ENCODE measurements at regions of chr17 and their contacts with region 1.

Region 1: DNA sequence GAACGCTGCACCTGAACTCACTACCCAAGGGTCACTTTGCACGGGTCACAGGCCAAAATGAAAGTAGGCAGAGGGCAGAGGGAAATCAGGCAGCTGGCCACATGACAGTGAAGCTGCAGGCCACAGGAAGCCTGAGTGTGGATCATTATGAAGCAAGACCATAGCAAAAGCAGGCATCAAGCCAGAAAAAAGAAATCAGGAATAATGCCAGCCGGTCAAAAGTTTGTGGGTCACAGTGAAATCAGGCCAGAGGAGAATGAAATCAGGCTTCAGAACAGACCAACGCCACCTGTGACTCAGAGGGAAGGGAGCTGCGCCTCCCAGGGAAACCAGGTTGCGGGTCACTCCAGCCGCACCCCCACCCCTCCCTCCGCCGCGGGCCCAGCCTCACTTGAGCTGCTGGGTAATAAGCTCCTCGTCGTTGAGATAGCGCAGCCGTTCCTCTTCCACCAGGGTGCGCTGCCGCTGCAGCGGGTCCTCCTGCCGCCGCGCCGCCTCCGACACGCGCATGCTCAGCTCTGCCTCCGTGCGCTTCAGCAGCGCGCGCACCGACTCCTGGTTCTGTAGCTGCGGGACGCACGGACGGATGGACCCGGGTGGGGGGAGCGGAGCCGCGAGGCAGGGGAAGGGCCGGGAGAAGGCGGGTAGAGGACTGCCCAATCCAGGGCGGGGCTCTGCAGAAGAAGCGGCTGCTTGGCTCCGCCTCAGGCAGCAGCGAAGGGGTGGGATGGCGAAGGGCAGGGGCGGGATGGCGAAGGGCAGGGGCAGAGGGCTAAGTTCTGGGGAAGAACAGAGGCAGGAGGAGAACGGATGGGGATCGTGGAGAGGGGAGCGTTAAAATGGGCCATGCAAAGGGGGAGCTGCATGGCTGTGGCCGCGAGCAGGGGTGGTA is 47.7 kb downstream of the SRCIN1 start:
- DNase-seq: peak; percentile 90
- H3K4me3 Mint-ChIP-seq: peak overlapping the region; percentile 77
- H3K27ac Mint-ChIP-seq: no peak overlapping the region
- H3K4me1 Mint-ChIP-seq: peaks cover 24% of the 10 kb centered on the region
- H3K27me3 Mint-ChIP-seq: peaks cover 45% of the 10 kb centered on the region

Region 2: GRCh38 chr17:38578229-38579082 is 20.4 kb after region 1 on chr17:
- CTCF ChIA-PET with region 1: interaction called, 38 read pairs
- POLR2A ChIA-PET with region 1: no interaction called
- DNase-seq: no peak
- H3K4me3 Mint-ChIP-seq: no peak overlapping the region
- H3K27ac Mint-ChIP-seq: no peak overlapping the region
- H3K4me1 Mint-ChIP-seq: no peaks in the 10 kb centered on the region
- H3K27me3 Mint-ChIP-seq: peaks cover 81% of the 10 kb centered on the region

Region 3: GRCh38 chr17:38584350-38584925 is 26.4 kb after region 1 on chr17:
- CTCF ChIA-PET with region 1: interaction called, 38 read pairs
- POLR2A ChIA-PET with region 1: no interaction called
- DNase-seq: peak; percentile 51
- H3K4me3 Mint-ChIP-seq: no peak overlapping the region
- H3K27ac Mint-ChIP-seq: no peak overlapping the region
- H3K4me1 Mint-ChIP-seq: peaks cover 11% of the 10 kb centered on the region
- H3K27me3 Mint-ChIP-seq: peaks cover 73% of the 10 kb centered on the region

Region 4: DNA sequence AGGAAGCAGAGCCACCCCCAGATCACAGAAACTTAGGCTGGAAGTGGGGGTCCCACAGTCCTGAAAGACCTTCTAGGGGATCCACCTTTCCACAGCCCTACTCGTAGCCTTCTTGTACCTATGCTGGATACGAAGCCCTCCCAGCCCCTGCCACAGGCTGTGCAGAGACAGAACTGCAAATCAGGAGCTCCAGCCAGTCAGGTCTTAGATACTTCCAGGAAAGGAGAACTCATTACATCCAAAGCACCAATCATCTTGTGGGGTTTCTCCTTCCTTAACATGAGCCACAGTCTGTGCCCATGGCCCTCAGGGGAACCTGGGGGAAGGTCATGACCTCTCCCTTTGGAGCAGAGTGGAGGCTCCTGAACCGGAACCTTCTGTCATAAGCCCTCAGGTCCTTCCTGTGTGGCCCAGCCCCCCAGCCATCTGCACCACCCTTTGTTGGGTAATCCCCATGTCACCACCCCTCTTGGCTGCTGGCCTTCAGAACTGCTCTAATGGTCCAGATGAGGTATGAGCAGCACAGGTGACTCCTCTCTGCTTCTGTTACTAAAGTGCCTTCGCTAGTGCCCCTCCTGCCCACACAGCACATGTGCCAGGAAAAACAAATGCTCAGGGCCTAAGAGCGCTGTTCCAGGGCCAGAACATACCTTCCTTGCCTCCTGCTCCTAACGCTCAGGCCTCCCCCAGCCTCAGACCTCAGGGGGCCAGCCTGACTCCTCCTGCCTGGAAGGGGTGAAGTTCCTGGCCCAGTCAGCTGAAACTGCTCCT is 33.1 kb after region 1 on chr17:
- CTCF ChIA-PET with region 1: interaction called, 38 read pairs
- POLR2A ChIA-PET with region 1: no interaction called
- DNase-seq: no peak
- H3K4me3 Mint-ChIP-seq: no peak overlapping the region
- H3K27ac Mint-ChIP-seq: no peak overlapping the region
- H3K4me1 Mint-ChIP-seq: peaks cover 24% of the 10 kb centered on the region
- H3K27me3 Mint-ChIP-seq: peaks cover 85% of the 10 kb centered on the region

Region 5: GRCh38 chr17:38601539-38602351 is 43.7 kb after region 1 on chr17:
- CTCF ChIA-PET with region 1: interaction called, 14 read pairs
- POLR2A ChIA-PET with region 1: interaction called, 3 read pairs
- DNase-seq: no peak
- H3K4me3 Mint-ChIP-seq: no peak overlapping the region
- H3K27ac Mint-ChIP-seq: no peak overlapping the region
- H3K4me1 Mint-ChIP-seq: peaks cover 7% of the 10 kb centered on the region
- H3K27me3 Mint-ChIP-seq: peaks cover 76% of the 10 kb centered on the region

Region 6: GRCh38 chr17:38667099-38667786 is 109.2 kb after region 1 on chr17:
- CTCF ChIA-PET with region 1: interaction called, 32 read pairs
- POLR2A ChIA-PET with region 1: no interaction called
- DNase-seq: peak; percentile 57
- H3K4me3 Mint-ChIP-seq: no peak overlapping the region
- H3K27ac Mint-ChIP-seq: no peak overlapping the region
- H3K4me1 Mint-ChIP-seq: peaks cover 8% of the 10 kb centered on the region
- H3K27me3 Mint-ChIP-seq: peaks cover 55% of the 10 kb centered on the region

Region 7: GRCh38 chr17:38922538-38923297 is 364.6 kb after region 1 on chr17:
- CTCF ChIA-PET with region 1: no interaction called
- POLR2A ChIA-PET with region 1: no interaction called
- DNase-seq: no peak
- H3K4me3 Mint-ChIP-seq: no peak overlapping the region
- H3K27ac Mint-ChIP-seq: no peak overlapping the region
- H3K4me1 Mint-ChIP-seq: peaks cover 35% of the 10 kb centered on the region
- H3K27me3 Mint-ChIP-seq: no peaks in the 10 kb centered on the region